Heart left ventricle (tissue), 16 donors: ENCODE measurements at regions of chr13 and their contacts with region 1.

Region 1: DNA sequence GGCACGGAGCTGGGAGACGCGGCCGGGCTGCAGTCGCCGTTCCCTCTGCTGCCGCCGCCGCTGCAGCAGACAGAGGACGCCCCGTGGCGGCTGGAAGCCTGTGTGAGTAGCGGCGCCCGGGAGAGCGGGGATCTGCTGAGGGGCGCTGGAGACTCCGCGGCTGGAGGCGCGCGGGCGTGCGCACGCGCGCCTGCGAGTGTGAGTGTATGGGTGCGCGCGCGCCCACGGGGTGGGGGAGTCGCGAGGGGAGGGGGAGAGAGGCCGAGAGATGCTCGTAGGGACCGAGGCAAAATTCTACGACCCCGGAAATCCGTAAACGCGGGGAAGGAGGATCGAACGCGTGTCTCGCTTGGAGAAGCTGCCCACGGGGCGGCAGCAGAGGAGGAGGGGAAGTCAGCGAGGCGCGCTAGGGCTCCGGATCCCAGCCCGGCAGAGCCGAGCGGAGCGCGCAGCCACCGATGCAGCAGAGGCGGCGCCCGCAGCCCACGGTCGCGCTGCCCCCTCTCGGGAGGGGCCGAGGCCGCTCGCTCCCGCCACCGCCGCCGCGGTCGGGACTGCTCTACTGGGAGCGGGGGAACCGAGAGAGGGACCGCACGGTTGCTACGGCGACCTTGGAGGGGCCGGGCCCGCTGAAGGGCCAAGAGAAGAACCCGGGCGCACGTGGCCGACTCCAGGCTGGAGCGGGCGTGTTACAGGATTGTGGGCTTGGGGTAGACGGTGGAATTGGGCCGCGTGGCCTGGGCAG is at the start of gene ENOX1:
- DNase-seq: peak; percentile 68 to 87 (median 81)
- ATAC-seq: peak; percentile 57 to 85 (median 84)
- H3K4me3 ChIP-seq: peak within 1 kb of the TSS; percentile 39 to 86 (median 70)
- H3K27ac ChIP-seq: peak within 1 kb of the TSS; percentile 35 to 88 (median 82)
- H3K4me1 ChIP-seq: peaks cover 0 to 38% (median 9%) of the 10 kb centered on the region in 12 donors
- H3K27me3 ChIP-seq: peaks cover 0 to 35% (median 0%) of the 10 kb centered on the region in 9 donors
- CTCF ChIP-seq: peak in 10 of 12 donors; percentile 5 to 49 (median 34)
- POLR2A ChIP-seq: no peak
- total RNA-seq, gene ENOX1: 3.7 to 10.1 (median 5.5) TPM

Region 2: GRCh38 chr13:42696191-42696590 is 1090.8 kb before region 1 on chr13:
- intact Hi-C with region 1: no loop called
- DNase-seq: no peak
- ATAC-seq: peak in 2 of 4 donors; percentile 16 to 36
- H3K4me3 ChIP-seq: no peak overlapping the region
- H3K27ac ChIP-seq: no peak overlapping the region
- H3K4me1 ChIP-seq: no peaks in the 10 kb centered on the region
- H3K27me3 ChIP-seq: no peaks in the 10 kb centered on the region
- CTCF ChIP-seq: no peak
- POLR2A ChIP-seq: no peak

Region 3: DNA sequence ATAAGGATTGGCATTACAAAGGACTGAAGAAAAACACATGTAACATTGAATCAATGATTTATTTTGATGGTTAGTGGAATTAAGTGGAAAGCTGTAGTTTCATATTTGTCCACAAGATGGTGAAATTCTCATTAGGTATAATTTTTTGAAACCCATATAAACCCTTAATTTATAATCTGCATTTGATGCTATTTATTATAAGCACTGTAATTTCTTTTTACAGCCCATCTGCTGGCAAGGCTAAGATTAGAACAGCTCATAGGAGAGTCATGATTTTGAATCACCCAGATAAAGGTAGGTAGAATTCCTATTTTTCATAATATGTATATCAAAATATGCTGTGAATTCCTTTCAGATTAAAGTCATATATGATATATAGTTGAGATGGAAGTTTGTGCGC is 701.4 kb before region 1 on chr13:
- intact Hi-C with region 1: loop called in 1 of 10 experiments (anchors 5 kb)
- DNase-seq: no peak
- ATAC-seq: no peak
- H3K4me3 ChIP-seq: no peak overlapping the region
- H3K27ac ChIP-seq: no peak overlapping the region
- H3K4me1 ChIP-seq: peaks cover 0 to 22% (median 0%) of the 10 kb centered on the region in 12 donors
- H3K27me3 ChIP-seq: no peaks in the 10 kb centered on the region
- CTCF ChIP-seq: peak; percentile 59 to 75 (median 68)
- POLR2A ChIP-seq: no peak

Region 4: DNA sequence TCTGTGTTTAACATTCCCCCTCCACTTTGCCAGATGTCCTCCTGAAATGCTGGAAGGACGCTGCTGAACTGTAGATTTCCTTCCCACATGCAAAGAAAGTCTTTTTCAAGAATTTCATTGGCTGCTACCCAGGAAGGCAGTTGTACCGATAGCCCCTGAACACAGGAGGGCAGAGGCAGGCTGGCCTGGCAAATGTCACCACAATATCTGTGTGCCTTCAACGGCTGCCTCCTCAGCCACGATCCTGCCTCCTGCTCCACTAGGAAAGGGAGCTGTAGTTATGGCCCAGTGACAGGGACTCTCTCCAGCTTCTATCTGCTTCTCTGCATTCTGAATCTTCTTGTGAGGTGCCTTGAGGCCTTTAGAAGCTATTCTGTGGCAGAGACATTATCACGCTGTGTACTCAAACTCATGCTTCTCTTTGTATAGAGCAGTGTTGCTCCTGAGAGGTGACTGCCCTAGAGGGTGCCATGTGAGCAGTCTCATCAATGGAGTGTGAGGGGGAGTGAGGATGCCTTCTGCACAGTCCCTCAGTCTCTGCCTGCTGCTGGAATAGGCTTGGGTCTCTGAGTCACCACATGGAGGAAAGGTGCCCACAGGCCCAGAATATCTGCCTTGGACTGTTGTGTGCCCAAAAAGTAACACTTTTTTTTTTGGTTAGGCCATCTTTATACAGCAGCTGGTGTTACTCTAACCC is 483.8 kb before region 1 on chr13:
- intact Hi-C with region 1: loop called in 6 of 10 experiments (anchors 2 to 10 kb)
- DNase-seq: peak; percentile 55 to 78 (median 68)
- ATAC-seq: peak; percentile 71 to 91 (median 90)
- H3K4me3 ChIP-seq: no peak overlapping the region
- H3K27ac ChIP-seq: peak overlapping the region in 7 of 12 donors; percentile 16 to 54 (median 35)
- H3K4me1 ChIP-seq: peaks cover 0 to 25% (median 9%) of the 10 kb centered on the region in 12 donors
- H3K27me3 ChIP-seq: no peaks in the 10 kb centered on the region
- CTCF ChIP-seq: peak; percentile 36 to 70 (median 54)
- POLR2A ChIP-seq: no peak

Region 5: DNA sequence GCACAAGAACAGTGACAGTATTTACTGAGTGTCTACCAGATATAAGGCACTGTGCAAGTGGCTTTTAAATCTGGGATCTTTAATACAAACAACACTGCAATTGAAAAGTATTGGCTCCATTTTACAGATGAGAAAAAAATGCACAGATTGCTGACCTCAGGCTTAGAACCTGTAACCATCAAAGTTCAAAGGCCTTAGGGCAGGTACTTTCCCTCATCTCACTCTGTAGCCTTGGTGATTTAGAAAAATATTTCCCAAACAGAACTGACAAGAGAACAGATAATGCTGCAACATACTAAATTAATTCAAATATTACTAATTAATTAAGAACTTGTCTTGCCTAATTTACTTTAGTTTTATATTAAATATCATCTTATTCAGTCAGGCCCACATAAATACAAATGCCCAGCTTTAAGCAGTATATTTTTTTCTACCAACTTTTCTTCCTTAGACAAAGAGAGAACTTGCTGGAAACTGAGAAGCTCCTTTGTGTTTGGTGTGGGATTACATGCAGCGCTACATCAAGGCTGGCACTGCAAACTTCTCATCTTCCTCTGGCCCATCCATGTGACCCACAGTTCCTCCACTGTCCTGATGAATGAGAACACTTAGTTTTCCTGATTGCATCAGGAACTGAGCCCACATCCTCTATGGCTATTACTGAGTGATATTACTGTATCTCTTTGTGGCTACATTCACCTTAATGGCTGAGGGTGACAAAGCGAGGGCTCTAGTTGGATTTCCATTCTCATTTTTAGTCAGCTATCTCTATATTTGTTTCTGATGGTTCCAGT is 302.3 kb before region 1 on chr13:
- intact Hi-C with region 1: loop called in 2 of 10 experiments (anchors 10 kb)
- DNase-seq: no peak
- ATAC-seq: peak in 2 of 4 donors; percentile 33 to 68
- H3K4me3 ChIP-seq: no peak overlapping the region
- H3K27ac ChIP-seq: peak overlapping the region in 1 of 12 donors; percentile 12
- H3K4me1 ChIP-seq: peaks cover 0 to 7% (median 0%) of the 10 kb centered on the region in 12 donors
- H3K27me3 ChIP-seq: no peaks in the 10 kb centered on the region
- CTCF ChIP-seq: no peak
- POLR2A ChIP-seq: no peak

Region 6: DNA sequence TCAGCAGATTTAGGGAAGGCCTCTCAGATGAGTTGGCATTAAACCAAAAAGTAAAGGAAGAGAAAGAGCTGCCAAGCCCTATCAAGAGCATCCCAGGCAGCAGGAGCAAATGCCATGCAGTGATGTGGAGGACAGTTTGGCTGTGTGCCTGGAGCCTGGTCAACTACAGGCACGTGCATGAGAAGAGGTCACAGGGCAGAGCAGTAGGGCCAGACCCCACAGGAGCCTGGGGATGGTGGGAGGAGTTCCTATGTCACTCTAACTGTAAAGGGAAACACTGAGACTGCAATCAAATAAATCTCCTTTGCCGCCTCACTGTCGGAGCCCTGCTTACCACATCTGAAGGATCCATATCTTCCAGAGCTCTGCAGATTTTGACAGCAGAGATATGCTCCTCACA is 240.7 kb before region 1 on chr13:
- intact Hi-C with region 1: loop called in 2 of 10 experiments (anchors 10 kb)
- DNase-seq: peak; percentile 49 to 82 (median 65)
- ATAC-seq: peak; percentile 60 to 83 (median 76)
- H3K4me3 ChIP-seq: no peak overlapping the region
- H3K27ac ChIP-seq: peak overlapping the region in 2 of 12 donors; percentile 11 to 25
- H3K4me1 ChIP-seq: peaks cover 0 to 35% (median 22%) of the 10 kb centered on the region in 12 donors
- H3K27me3 ChIP-seq: no peaks in the 10 kb centered on the region
- CTCF ChIP-seq: no peak
- POLR2A ChIP-seq: no peak

Region 7: GRCh38 chr13:43686557-43686956 is 100.4 kb before region 1 on chr13:
- intact Hi-C with region 1: loop called in 2 of 10 experiments (anchors 5 to 10 kb)
- DNase-seq: peak in 4 of 5 donors; percentile 72 to 77 (median 76)
- ATAC-seq: peak; percentile 74 to 90 (median 82)
- H3K4me3 ChIP-seq: no peak overlapping the region
- H3K27ac ChIP-seq: peak overlapping the region in 11 of 12 donors; percentile 24 to 80 (median 54)
- H3K4me1 ChIP-seq: peaks cover 0 to 48% (median 22%) of the 10 kb centered on the region in 12 donors
- H3K27me3 ChIP-seq: no peaks in the 10 kb centered on the region
- CTCF ChIP-seq: no peak
- POLR2A ChIP-seq: no peak

Region 8: GRCh38 chr13:43963726-43964125 is 176.8 kb after region 1 on chr13:
- intact Hi-C with region 1: no loop called
- DNase-seq: no peak
- ATAC-seq: peak in 2 of 4 donors; percentile 42 to 45
- H3K4me3 ChIP-seq: no peak overlapping the region
- H3K27ac ChIP-seq: no peak overlapping the region
- H3K4me1 ChIP-seq: no peaks in the 10 kb centered on the region
- H3K27me3 ChIP-seq: no peaks in the 10 kb centered on the region
- CTCF ChIP-seq: no peak
- POLR2A ChIP-seq: no peak